Mammary epithelial cell (primary cell): ENCODE measurements at regions of chr5 and their contacts with region 1.

Region 1: DNA sequence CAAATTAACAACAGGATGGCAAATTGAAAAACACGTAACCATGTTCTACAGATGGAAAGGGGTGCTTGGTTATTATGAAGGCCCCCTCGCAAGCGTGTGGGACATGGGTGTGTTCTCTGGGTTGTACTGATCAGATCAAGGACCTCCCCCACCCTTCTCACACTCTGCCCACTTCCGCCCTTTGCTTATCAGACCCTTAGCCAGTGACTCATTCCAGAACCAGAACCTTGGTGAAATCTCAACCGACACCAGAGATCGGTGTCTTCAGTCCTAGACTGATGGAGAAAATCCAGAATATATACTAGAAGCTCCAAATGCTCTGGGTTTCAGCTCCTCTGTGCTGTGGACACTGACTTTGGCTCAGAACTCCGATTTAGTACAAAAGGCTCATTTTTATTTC is 64.9 kb downstream of the PTTG1 start:
- DNase-seq: no peak
- H3K4me3 ChIP-seq: no peak overlapping the region
- H3K27ac ChIP-seq: no peak overlapping the region
- H3K4me1 ChIP-seq: no peaks in the 10 kb centered on the region
- H3K27me3 ChIP-seq: no peaks in the 10 kb centered on the region
- CTCF ChIP-seq: no peak

Region 2: GRCh38 chr5:160434022-160434531 is 52.5 kb before region 1 on chr5:
- CTCF ChIA-PET with region 1: no interaction called
- dilution Hi-C with region 1: loop called (anchors 5 kb)
- in situ Hi-C with region 1: no loop called
- intact Hi-C with region 1: no loop called
- DNase-seq: peak; percentile 71
- H3K4me3 ChIP-seq: no peak overlapping the region
- H3K27ac ChIP-seq: no peak overlapping the region
- H3K4me1 ChIP-seq: peaks cover 20% of the 10 kb centered on the region
- H3K27me3 ChIP-seq: no peaks in the 10 kb centered on the region
- CTCF ChIP-seq: no peak

Region 3: DNA sequence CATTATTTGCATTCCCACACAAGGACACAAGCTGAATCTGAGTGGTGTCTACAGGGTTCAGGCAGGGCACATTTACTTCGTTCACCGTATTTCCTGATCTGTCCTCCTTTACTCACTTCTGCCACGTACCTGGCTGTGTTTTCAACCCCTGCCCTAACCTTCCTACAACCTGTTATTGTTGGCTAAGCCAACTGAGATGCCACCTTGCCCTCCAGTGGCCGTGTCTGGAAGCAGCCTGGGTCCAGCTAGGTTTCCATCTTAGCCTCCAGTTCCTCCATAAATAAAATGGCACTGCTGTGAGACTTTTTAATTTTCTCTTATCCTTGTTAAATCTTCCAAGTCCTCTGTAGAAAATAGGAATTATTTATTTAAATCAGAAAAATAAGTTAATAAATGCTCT is 300.7 kb after region 1 on chr5:
- CTCF ChIA-PET with region 1: no interaction called
- dilution Hi-C with region 1: no loop called
- in situ Hi-C with region 1: no loop called
- intact Hi-C with region 1: no loop called
- DNase-seq: peak; percentile 40
- H3K4me3 ChIP-seq: no peak overlapping the region
- H3K27ac ChIP-seq: no peak overlapping the region
- H3K4me1 ChIP-seq: no peaks in the 10 kb centered on the region
- H3K27me3 ChIP-seq: no peaks in the 10 kb centered on the region
- CTCF ChIP-seq: peak; percentile 61 to 77

Region 4: GRCh38 chr5:161734741-161735140 is 1248.2 kb after region 1 on chr5:
- CTCF ChIA-PET with region 1: no interaction called
- dilution Hi-C with region 1: no loop called
- in situ Hi-C with region 1: no loop called
- intact Hi-C with region 1: no loop called
- DNase-seq: no peak
- H3K4me3 ChIP-seq: no peak overlapping the region
- H3K27ac ChIP-seq: no peak overlapping the region
- H3K4me1 ChIP-seq: no peaks in the 10 kb centered on the region
- H3K27me3 ChIP-seq: no peaks in the 10 kb centered on the region
- CTCF ChIP-seq: no peak